ENCODE measurements at regions of chrX and their contacts with region 1.

Region 1: GRCh38 chrX:4830568-4831557 is 1117.4 kb upstream of the PRKX start:
- DNase-seq: no peak
- H3K4me3 ChIP-seq: no peak overlapping the region
- H3K27ac ChIP-seq: no peak overlapping the region
- H3K4me1 ChIP-seq: no peaks in the 10 kb centered on the region
- H3K27me3 ChIP-seq: no peaks in the 10 kb centered on the region
- CTCF ChIP-seq: no peak
- POLR2A ChIP-seq: no peak

Region 2: GRCh38 chrX:5474282-5474681 is 643.4 kb after region 1 on chrX:
- intact Hi-C with region 1: loop called (anchors 5 kb)
- DNase-seq: no peak
- H3K4me3 ChIP-seq: no peak overlapping the region
- H3K27ac ChIP-seq: no peak overlapping the region
- H3K4me1 ChIP-seq: no peaks in the 10 kb centered on the region
- H3K27me3 ChIP-seq: no peaks in the 10 kb centered on the region
- CTCF ChIP-seq: no peak
- POLR2A ChIP-seq: no peak

Region 3: DNA sequence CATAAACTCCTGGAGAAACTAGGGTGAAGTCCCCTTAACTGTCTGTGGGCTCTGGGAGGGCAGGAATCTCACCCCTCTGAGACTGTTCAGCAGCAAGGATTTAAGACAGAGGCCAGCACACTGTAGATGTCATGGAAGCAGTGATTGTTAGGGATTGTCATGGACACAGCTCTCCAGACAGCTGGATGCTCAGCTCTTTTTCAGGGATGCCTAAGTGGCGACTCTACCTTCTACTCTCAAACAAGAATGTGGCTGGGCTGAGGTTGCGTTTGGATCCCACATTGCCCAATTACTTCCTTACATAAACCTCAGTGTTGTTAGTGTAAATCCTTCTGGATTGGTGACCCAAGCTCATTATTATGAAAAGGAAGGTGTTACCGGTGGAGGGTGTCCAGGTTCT is 1996.0 kb after region 1 on chrX:
- intact Hi-C with region 1: no loop called
- DNase-seq: no peak
- H3K4me3 ChIP-seq: no peak overlapping the region
- H3K27ac ChIP-seq: no peak overlapping the region
- H3K4me1 ChIP-seq: no peaks in the 10 kb centered on the region
- H3K27me3 ChIP-seq: no peaks in the 10 kb centered on the region
- CTCF ChIP-seq: no peak
- POLR2A ChIP-seq: no peak

Measured in vagina (tissue), 2 donors.